Ovary (tissue), 10 donors: ENCODE measurements at regions of chr1 and their contacts with region 1.

Region 1: GRCh38 chr1:113904674-113905434 is at the starts of genes AP4B1 and DCLRE1B:
- DNase-seq: peak; percentile 97 to 99 (median 98)
- H3K4me3 ChIP-seq: peak within 1 kb of the TSS; percentile 71
- H3K27ac ChIP-seq: peak within 1 kb of the TSS; percentile 77 to 86
- H3K4me1 ChIP-seq: peaks cover 2% of the 10 kb centered on the region
- H3K27me3 ChIP-seq: no peaks in the 10 kb centered on the region
- CTCF ChIP-seq: peak; percentile 77 to 93 (median 90)
- EP300 ChIP-seq: no peak
- POLR2A ChIP-seq: peak; percentile 54
- total RNA-seq, gene AP4B1: 14.4 to 23.3 (median 16.9) TPM
- total RNA-seq, gene DCLRE1B: 2.4 to 6.8 (median 5.0) TPM

Region 2: DNA sequence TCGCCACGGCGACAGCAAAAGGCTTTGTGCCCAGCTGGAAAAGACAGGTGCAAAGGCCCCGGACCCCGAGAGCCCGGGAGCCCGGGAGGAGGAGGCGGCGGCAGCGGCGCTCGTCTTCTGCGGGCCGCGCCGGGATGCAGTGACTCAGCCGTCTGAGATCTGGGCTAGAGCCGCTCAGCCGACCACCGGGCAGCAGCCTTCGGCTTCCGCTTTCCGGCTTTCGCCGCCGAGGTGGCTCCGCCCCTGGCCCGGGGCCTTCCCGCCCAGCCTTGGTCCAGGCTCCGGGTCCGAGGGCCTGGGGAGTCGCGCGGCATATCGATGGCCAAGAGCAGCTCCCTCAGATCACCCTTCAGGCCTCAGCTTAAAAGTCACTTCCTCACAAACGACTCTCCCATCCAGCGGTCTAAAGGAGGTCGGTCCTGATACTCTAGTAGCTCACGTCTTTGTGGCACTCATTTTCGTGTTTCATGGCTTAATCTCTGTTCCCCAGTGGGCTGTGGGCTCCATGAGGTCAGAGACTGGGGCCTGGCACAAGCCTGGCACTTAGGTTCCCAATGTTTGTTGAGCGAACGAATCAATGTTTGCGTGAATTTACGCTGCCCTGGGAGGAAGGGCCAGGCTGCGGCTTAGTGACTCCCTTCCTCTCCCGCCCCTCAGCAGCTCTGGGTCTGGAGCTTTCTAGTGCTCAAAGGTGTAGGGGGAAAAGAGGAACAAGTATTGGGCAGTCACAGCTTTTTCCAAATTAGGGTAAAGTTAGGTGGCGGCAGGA is 145.3 kb before region 1 on chr1 and contains the start of gene PHTF1:
- intact Hi-C with region 1: loop called in 1 of 4 experiments (anchors 10 kb)
- DNase-seq: peak; percentile 71 to 83 (median 75)
- H3K4me3 ChIP-seq: peak within 1 kb of the TSS; percentile 81
- H3K27ac ChIP-seq: peak within 1 kb of the TSS; percentile 72 to 89
- H3K4me1 ChIP-seq: no peaks in the 10 kb centered on the region
- H3K27me3 ChIP-seq: no peaks in the 10 kb centered on the region
- CTCF ChIP-seq: no peak
- EP300 ChIP-seq: no peak
- POLR2A ChIP-seq: peak; percentile 37
- total RNA-seq, gene PHTF1: 6.6 to 28.6 (median 9.7) TPM

Region 3: GRCh38 chr1:113928941-113929749 is 24.3 kb after region 1 on chr1 and contains the start of gene HIPK1:
- intact Hi-C with region 1: loop called in 2 of 4 experiments (anchors 2 kb)
- DNase-seq: peak; percentile 92 to 96 (median 93)
- H3K4me3 ChIP-seq: peak within 1 kb of the TSS; percentile 76
- H3K27ac ChIP-seq: peak within 1 kb of the TSS; percentile 82 to 89
- H3K4me1 ChIP-seq: peaks cover 9% of the 10 kb centered on the region
- H3K27me3 ChIP-seq: no peaks in the 10 kb centered on the region
- CTCF ChIP-seq: peak in 1 of 3 donors; percentile 22
- EP300 ChIP-seq: peak; percentile 29
- POLR2A ChIP-seq: peak; percentile 69
- total RNA-seq, gene HIPK1: 35.5 to 77.0 (median 68.3) TPM